Mammary epithelial cell (primary cell): ENCODE measurements at regions of chr6 and their contacts with region 1.

Region 1: GRCh38 chr6:118283766-118284165 is 264.3 kb upstream of the PLN start:
- DNase-seq: peak; percentile 56
- H3K4me3 ChIP-seq: no peak overlapping the region
- H3K27ac ChIP-seq: no peak overlapping the region
- H3K4me1 ChIP-seq: no peaks in the 10 kb centered on the region
- H3K27me3 ChIP-seq: no peaks in the 10 kb centered on the region
- CTCF ChIP-seq: peak; percentile 77 to 80

Region 2: DNA sequence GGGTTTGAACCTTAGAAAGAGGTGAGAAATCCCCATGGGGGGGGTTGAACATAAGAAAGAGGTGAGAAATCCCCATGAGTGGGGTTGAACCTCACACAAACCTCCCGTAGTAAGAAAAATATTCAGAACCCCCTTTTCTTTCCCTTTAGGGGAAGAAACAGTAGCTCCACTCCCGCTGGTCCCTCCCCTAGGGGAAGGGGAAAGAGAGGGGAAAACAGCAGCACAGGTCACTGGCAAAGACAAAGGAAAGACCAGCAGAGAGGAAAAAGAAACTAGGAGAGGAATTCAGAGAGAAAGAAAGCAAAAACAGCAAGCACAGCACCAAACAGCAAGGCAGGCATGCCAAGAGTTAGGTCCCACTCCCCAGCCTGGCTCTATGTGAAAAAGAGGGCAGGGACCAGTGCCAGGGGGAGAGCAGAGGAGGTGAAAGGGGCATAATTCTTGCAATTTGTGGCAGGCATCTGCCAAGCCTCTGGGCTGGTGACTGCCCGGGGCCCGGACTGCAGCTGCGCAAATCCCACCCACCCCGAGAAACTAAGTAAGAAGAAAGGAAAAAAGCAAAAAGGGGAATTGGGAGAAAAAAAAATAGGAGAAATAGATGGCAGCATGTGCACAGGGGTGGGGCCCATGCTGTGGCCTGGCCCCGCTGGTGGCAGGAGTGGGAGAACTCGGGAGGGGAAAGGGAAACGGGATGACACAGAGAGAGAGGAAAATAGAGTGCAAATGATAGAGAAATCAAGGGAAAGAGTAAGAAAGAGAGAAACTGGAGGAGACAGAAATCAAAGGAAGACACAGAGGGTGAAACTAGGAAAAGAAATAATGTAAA is 666.3 kb before region 1 on chr6:
- CTCF ChIA-PET with region 1: no interaction called
- dilution Hi-C with region 1: no loop called
- in situ Hi-C with region 1: no loop called
- intact Hi-C with region 1: no loop called
- DNase-seq: no peak
- H3K4me3 ChIP-seq: no peak overlapping the region
- H3K27ac ChIP-seq: no peak overlapping the region
- H3K4me1 ChIP-seq: no peaks in the 10 kb centered on the region
- H3K27me3 ChIP-seq: no peaks in the 10 kb centered on the region
- CTCF ChIP-seq: no peak

Region 3: GRCh38 chr6:117840541-117840983 is 443.2 kb before region 1 on chr6:
- CTCF ChIA-PET with region 1: no interaction called
- dilution Hi-C with region 1: no loop called
- in situ Hi-C with region 1: no loop called
- intact Hi-C with region 1: loop called (anchors 1 kb)
- DNase-seq: peak; percentile 42
- H3K4me3 ChIP-seq: no peak overlapping the region
- H3K27ac ChIP-seq: no peak overlapping the region
- H3K4me1 ChIP-seq: no peaks in the 10 kb centered on the region
- H3K27me3 ChIP-seq: peaks cover 1% of the 10 kb centered on the region
- CTCF ChIP-seq: peak; percentile 29 to 53

Region 4: GRCh38 chr6:118514689-118515088 is 230.9 kb after region 1 on chr6:
- CTCF ChIA-PET with region 1: interaction called, 7 read pairs
- dilution Hi-C with region 1: no loop called
- in situ Hi-C with region 1: loop called (anchors 10 to 25 kb)
- intact Hi-C with region 1: loop called (anchors 1 kb)
- DNase-seq: no peak
- H3K4me3 ChIP-seq: no peak overlapping the region
- H3K27ac ChIP-seq: no peak overlapping the region
- H3K4me1 ChIP-seq: no peaks in the 10 kb centered on the region
- H3K27me3 ChIP-seq: no peaks in the 10 kb centered on the region
- CTCF ChIP-seq: no peak

Region 5: DNA sequence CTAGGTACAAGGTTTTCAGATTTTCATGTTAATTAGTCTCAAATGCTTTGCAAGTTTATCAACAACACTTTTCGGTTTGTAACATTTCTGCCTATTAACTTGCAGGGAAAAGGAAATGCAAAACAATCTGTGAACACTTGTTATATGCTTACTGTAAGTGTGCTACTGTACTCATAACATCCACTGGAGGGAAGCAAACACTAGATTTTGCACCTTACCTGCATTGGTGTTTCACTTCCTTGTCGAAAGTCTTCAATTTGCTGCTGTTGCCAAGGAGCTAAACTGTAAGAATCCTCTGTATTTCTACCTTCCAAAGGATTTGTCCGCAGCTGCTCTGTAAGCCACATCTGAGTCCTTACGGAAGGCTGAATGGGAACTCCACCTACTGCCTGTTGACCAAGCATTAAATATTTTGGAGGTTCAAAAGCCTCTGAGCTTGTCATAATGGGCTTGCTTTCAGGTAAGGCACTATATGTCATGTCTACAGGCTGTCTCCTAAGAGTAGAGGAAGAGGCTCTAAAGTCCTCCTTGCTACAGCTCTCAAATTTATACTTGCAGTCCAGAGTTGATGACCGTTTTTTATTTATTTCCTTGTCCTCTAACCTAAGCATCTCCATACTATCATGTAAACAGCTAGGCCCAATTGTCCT is 281.7 kb after region 1 on chr6:
- CTCF ChIA-PET with region 1: no interaction called
- dilution Hi-C with region 1: no loop called
- in situ Hi-C with region 1: no loop called
- intact Hi-C with region 1: loop called (anchors 1 kb)
- DNase-seq: peak; percentile 54
- H3K4me3 ChIP-seq: no peak overlapping the region
- H3K27ac ChIP-seq: no peak overlapping the region
- H3K4me1 ChIP-seq: no peaks in the 10 kb centered on the region
- H3K27me3 ChIP-seq: no peaks in the 10 kb centered on the region
- CTCF ChIP-seq: peak; percentile 48 to 61

Region 6: GRCh38 chr6:118618679-118619377 is 335.1 kb after region 1 on chr6:
- CTCF ChIA-PET with region 1: no interaction called
- dilution Hi-C with region 1: no loop called
- in situ Hi-C with region 1: no loop called
- intact Hi-C with region 1: loop called (anchors 2 kb)
- DNase-seq: peak; percentile 8
- H3K4me3 ChIP-seq: no peak overlapping the region
- H3K27ac ChIP-seq: no peak overlapping the region
- H3K4me1 ChIP-seq: no peaks in the 10 kb centered on the region
- H3K27me3 ChIP-seq: no peaks in the 10 kb centered on the region
- CTCF ChIP-seq: peak; percentile 90 to 93

Region 7: DNA sequence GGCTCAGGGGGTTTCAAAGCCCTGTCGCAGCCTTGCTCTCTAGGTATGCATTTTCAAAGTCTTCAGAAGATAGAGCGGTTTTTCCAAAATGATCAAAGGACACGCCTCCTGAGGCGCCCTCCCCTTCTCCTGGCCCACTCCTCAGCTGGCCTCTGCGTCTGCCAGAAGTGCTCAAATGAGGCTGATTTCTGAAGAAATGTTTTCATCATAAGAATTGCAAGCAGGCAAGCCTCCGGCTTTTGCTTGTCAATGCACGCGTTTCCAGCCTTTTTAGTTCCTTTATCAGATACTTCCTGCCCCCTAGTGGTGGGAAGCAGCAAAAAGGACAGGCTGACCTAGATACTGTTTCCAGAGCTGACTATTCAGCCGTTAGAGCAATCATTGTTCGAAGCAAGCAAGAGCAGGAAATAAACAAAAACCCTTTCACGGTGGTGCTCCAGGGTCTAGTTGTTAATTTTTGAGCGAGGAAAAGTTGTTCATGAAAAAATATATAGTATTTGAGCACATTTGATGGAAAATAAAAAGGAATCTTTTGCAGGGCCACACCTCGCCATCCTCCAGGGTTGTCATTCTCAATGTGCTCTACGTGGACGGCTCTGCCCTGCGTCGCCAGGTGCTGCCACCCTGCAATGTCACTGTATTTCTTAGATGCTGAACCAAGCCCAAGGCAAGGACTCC is 516.8 kb after region 1 on chr6:
- CTCF ChIA-PET with region 1: no interaction called
- dilution Hi-C with region 1: no loop called
- in situ Hi-C with region 1: loop called (anchors 5 to 10 kb)
- intact Hi-C with region 1: loop called (anchors 1 kb)
- DNase-seq: peak; percentile 70
- H3K4me3 ChIP-seq: no peak overlapping the region
- H3K27ac ChIP-seq: no peak overlapping the region
- H3K4me1 ChIP-seq: peaks cover 6% of the 10 kb centered on the region
- H3K27me3 ChIP-seq: no peaks in the 10 kb centered on the region
- CTCF ChIP-seq: peak; percentile 91 to 98

Region 8: DNA sequence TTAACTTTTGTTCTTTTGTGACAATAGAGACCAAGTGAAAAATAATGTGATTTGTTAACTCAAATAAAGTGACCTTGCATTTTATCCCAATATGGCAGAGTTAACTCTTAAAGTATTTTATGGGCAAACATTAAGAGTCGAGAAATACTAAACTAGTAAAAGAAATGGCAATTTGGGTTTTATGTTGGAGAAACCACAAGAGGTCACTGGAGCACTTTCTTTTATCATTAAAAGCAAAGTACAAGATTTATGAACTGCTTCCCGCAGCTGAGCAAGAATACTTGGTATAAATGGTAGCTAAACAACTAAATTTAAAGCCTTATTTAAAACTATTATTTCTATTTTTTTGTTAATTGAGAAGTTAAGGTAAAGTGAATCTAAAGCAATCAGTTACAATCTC is 684.6 kb after region 1 on chr6:
- CTCF ChIA-PET with region 1: no interaction called
- dilution Hi-C with region 1: no loop called
- in situ Hi-C with region 1: no loop called
- intact Hi-C with region 1: loop called (anchors 10 kb)
- DNase-seq: peak; percentile 4
- H3K4me3 ChIP-seq: no peak overlapping the region
- H3K27ac ChIP-seq: no peak overlapping the region
- H3K4me1 ChIP-seq: no peaks in the 10 kb centered on the region
- H3K27me3 ChIP-seq: no peaks in the 10 kb centered on the region
- CTCF ChIP-seq: peak; percentile 28 to 40